OCI-LY7 (cell line): ENCODE measurements at regions of chr22 and their contacts with region 1.

Region 1: DNA sequence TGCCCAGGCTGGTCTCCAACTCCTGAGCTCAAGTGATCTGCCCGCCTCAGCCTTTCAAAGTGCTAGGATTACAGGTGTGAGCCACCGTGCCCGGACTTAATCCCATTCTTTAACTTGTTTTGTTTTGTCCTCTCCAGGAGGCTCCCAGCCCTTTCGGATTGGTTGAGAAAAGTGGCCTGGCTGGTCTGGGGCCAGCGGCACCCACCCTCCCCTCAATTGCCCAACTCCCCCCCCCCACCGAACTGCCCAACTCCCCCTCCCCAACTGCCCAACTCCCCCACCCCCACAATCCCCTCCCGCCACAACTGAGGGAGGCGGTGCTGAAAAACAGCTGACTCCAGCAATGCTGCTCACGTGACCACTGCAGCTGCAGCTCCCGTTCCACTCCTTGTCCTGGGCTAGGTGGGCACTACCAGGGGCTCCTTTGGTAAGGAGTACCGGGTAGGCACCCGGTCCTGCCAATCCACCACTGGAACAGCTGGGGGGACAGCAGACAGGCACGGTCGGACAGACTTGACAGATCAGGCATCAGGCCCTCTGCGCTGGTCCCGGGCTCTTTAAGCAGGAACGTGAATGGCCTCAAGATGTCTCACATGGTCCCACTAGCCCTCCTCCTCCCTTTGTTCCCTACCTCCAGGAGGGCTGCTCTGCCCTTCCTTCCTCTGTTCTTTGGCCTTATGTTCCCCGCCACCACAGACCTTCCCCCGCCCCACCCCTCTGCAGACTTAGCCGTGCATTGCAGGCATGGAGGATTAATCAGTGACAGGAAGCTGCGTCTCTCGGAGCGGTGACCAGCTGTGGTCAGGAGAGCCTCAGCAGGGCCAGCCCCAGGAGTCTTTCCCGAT is at the start of gene TCN2:
- DNase-seq: no peak
- H3K4me3 ChIP-seq: peak within 1 kb of the TSS; percentile 22
- H3K27ac ChIP-seq: no peak within 1 kb of the TSS
- H3K4me1 ChIP-seq: peaks cover 36% of the 10 kb centered on the region
- CTCF ChIP-seq: no peak
- total RNA-seq, gene TCN2: 0.23 TPM in 1 of 2 replicates, not detected in the other

Region 2: DNA sequence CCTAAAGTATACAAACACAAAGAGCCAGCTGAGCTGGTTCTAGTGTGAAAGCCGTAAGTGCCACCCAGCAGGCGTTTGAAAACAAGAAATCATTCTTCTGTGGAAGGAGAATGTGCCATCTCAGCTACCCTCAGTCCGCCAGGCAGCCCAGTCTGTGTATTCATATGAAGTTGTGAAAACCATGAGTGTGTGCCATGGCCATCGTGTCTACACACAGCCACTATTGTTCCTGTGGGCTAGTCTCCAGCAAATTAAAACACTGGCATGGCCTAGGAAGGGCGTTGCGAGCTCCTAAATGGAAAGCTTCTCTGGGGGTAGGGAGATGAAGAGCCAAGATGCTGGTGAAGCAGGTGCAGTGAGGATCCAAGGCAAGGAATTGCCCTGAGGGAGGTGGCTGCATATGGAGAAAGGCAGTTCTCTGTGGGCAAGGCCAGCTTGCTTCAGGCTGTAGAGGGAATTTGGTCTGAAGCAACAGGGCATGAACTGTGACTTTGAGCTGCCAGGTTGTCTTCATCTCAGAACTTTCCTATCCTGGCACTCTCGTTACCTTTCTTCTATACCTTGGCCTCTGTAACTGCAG is 577.9 kb before region 1 on chr22:
- CTCF ChIA-PET with region 1: interaction called, 17 read pairs
- POLR2A ChIA-PET with region 1: no interaction called
- intact Hi-C with region 1: no loop called
- DNase-seq: no peak
- H3K4me3 ChIP-seq: no peak overlapping the region
- H3K27ac ChIP-seq: no peak overlapping the region
- H3K4me1 ChIP-seq: no peaks in the 10 kb centered on the region
- CTCF ChIP-seq: no peak

Region 3: DNA sequence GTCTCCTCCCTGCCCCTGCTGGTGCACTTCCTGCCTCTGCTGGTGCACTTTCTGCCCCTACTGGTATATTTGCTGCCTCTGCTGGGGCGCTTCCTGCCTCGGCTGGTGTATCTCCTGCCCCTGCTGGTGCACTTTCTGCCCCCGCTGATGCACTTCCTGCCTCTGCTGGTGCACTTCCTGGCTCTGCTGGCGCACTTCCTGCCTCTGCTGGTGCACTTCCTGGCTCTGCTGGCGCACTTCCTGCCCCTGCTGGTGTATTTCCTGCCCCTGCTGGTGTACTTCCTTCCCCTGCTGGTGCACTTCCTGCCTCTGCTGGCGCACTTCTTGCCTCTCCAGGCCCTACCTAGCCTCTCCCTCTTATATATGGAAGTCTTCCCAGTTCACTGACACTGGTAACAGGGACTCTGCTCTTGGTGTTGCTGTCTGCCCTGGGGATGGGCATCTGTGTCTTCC is 171.0 kb before region 1 on chr22:
- CTCF ChIA-PET with region 1: no interaction called
- POLR2A ChIA-PET with region 1: no interaction called
- intact Hi-C with region 1: loop called (anchors 5 kb)
- DNase-seq: peak; percentile 90
- H3K4me3 ChIP-seq: peak overlapping the region; percentile 63
- H3K27ac ChIP-seq: peak overlapping the region; percentile 67
- H3K4me1 ChIP-seq: peaks cover 25% of the 10 kb centered on the region
- CTCF ChIP-seq: peak; percentile 67

Region 4: DNA sequence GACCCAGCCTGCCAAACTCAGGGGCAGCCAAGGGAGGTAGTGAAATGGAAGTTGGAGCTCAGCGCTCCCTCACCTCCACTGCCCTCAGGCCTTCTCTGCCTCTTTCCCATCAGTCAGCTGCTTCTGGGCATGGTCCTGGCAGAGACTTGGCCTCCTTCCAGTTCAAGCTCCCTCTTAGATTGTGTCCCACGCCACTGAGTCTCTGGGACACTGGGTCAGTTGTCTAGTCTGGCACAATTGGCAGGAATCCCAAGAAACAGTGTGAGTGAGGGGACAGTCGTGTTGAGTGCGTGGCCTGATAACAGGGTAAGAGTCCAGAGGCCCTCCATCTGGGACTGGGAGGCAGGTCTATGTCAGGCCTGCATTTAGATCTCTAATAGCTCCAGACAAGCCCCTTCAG is 21.8 kb after region 1 on chr22:
- CTCF ChIA-PET with region 1: no interaction called
- POLR2A ChIA-PET with region 1: no interaction called
- intact Hi-C with region 1: no loop called
- DNase-seq: no peak
- H3K4me3 ChIP-seq: no peak overlapping the region
- H3K27ac ChIP-seq: no peak overlapping the region
- H3K4me1 ChIP-seq: no peaks in the 10 kb centered on the region
- CTCF ChIP-seq: no peak

Region 5: GRCh38 chr22:30925667-30926066 is 319.0 kb after region 1 on chr22:
- CTCF ChIA-PET with region 1: interaction called, 13 read pairs
- POLR2A ChIA-PET with region 1: no interaction called
- intact Hi-C with region 1: no loop called
- DNase-seq: no peak
- H3K4me3 ChIP-seq: no peak overlapping the region
- H3K27ac ChIP-seq: no peak overlapping the region
- H3K4me1 ChIP-seq: peaks cover 6% of the 10 kb centered on the region
- CTCF ChIP-seq: no peak